ENCODE measurements at regions of chr5 and their contacts with region 1.

Region 1: DNA sequence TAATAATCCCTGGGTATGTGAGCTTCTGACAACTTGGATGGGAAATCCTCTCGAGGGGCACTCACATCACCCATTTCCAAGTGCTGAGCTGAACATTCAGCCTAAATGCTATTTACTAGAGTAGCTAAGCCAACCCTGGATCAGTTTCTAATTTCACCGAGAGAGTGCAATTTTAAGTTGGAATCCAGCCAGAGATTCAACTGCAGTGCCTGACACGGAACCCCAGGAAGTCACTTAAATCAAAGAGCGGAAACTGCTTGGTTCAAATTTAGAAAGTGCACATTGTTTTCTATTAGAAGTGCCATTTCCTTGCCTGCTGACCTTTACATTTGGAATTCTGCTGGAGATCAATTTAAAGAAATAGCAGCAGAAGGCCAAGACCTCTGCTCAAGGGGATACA is 8.8 kb downstream of the SPRY4 start:
- DNase-seq: no peak
- ATAC-seq: peak in 3 of 4 donors; percentile 16 to 38 (median 32)
- H3K4me3 ChIP-seq: peak overlapping the region in 6 of 12 donors; percentile 2 to 29 (median 20)
- H3K27ac ChIP-seq: peak overlapping the region in 11 of 12 donors; percentile 27 to 97 (median 83)
- H3K4me1 ChIP-seq: peaks cover 20 to 98% (median 84%) of the 10 kb centered on the region in 12 donors
- H3K27me3 ChIP-seq: peaks cover 0 to 4% (median 0%) of the 10 kb centered on the region in 9 donors
- CTCF ChIP-seq: no peak
- POLR2A ChIP-seq: no peak

Region 2: GRCh38 chr5:142143878-142144277 is 172.2 kb before region 1 on chr5:
- intact Hi-C with region 1: no loop called
- DNase-seq: no peak
- ATAC-seq: peak in 1 of 4 donors; percentile 42
- H3K4me3 ChIP-seq: no peak overlapping the region
- H3K27ac ChIP-seq: no peak overlapping the region
- H3K4me1 ChIP-seq: peaks cover 0 to 5% (median 0%) of the 10 kb centered on the region in 12 donors
- H3K27me3 ChIP-seq: no peaks in the 10 kb centered on the region
- CTCF ChIP-seq: peak; percentile 39 to 67 (median 54)
- POLR2A ChIP-seq: no peak

Region 3: DNA sequence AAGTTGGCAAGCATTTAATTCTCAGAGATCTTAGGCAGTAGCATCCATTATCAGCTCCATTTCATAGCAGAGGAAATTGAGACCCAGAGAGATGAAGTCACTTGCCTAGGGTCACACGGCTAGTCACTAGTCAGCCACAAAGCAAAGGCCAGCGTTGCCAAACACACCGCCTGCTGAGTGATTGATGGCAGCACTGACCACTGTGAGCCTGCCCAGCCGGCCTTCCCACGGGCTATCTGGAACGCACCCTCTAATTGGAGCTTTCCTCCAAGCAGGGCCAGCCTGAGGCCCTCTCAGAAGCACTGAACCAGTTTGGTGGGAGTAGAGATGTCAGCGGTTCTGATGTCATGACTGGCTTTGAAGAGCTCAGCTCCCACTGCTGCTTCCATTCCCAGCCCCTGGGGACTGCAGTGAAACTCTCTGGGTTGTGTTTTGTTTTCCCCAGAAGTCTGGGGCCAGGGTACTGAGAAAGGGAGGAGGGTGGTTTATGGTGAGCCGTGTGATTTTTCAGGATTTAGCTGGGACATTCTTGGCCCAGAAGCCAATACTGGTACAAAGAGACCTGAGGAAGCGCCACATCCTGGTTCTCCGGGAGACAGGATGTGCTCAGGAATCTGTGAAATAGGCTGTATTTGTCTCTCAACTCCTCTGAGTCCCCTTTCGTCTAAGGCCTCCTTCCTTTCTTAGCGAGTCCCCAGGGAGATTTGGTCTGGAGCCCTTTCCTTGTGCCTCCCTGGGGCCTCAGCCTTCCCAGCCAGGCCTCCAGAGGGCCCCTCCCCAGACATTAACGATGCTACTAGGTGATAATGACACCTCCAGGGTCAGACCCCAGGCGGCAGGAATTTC is 35.8 kb before region 1 on chr5:
- intact Hi-C with region 1: loop called in 3 of 10 experiments (anchors 5 kb)
- DNase-seq: peak; percentile 78 to 88 (median 87)
- ATAC-seq: peak; percentile 81 to 93 (median 92)
- H3K4me3 ChIP-seq: no peak overlapping the region
- H3K27ac ChIP-seq: peak overlapping the region; percentile 37 to 87 (median 74)
- H3K4me1 ChIP-seq: peaks cover 8 to 44% (median 23%) of the 10 kb centered on the region in 12 donors
- H3K27me3 ChIP-seq: peaks cover 0 to 3% (median 0%) of the 10 kb centered on the region in 9 donors
- CTCF ChIP-seq: no peak
- POLR2A ChIP-seq: no peak

Region 4: DNA sequence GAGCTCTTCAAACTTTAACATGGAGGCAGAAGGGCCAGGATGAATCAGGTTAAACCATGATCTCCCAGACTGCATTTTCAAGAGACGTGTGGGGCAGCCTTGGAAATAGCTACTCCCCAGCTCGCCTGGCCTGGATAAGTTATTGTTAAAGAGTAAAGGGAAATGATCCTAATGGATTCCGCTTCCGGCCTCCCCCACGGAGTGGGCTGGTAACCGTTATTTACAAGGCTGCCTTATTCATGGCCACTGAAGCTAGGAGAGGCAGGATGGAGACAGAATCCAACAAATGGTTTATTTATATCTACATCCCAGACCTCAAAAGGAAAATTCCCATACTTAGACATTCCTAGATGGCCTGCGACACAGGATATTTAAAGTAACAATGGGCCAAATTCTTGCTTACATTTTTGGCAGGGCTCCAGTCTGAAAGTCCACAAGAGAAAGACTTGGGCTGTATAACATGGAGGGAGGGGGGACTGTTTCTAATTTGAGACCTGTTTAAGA is 19.1 kb before region 1 on chr5:
- intact Hi-C with region 1: loop called in 1 of 10 experiments (anchors 2 kb)
- DNase-seq: peak in 4 of 5 donors; percentile 50 to 82 (median 64)
- ATAC-seq: peak; percentile 58 to 84 (median 74)
- H3K4me3 ChIP-seq: no peak overlapping the region
- H3K27ac ChIP-seq: peak overlapping the region in 10 of 12 donors; percentile 2 to 76 (median 57)
- H3K4me1 ChIP-seq: peaks cover 4 to 51% (median 30%) of the 10 kb centered on the region in 12 donors
- H3K27me3 ChIP-seq: no peaks in the 10 kb centered on the region
- CTCF ChIP-seq: no peak
- POLR2A ChIP-seq: no peak